BJ (cell line): ENCODE measurements at regions of chr6 and their contacts with region 1.

Region 1: GRCh38 chr6:53761036-53761435 is 33.8 kb upstream of the LRRC1 start:
- DNase-seq: no peak
- H3K4me3 ChIP-seq: no peak overlapping the region
- H3K27me3 ChIP-seq: no peaks in the 10 kb centered on the region
- CTCF ChIP-seq: no peak

Region 2: DNA sequence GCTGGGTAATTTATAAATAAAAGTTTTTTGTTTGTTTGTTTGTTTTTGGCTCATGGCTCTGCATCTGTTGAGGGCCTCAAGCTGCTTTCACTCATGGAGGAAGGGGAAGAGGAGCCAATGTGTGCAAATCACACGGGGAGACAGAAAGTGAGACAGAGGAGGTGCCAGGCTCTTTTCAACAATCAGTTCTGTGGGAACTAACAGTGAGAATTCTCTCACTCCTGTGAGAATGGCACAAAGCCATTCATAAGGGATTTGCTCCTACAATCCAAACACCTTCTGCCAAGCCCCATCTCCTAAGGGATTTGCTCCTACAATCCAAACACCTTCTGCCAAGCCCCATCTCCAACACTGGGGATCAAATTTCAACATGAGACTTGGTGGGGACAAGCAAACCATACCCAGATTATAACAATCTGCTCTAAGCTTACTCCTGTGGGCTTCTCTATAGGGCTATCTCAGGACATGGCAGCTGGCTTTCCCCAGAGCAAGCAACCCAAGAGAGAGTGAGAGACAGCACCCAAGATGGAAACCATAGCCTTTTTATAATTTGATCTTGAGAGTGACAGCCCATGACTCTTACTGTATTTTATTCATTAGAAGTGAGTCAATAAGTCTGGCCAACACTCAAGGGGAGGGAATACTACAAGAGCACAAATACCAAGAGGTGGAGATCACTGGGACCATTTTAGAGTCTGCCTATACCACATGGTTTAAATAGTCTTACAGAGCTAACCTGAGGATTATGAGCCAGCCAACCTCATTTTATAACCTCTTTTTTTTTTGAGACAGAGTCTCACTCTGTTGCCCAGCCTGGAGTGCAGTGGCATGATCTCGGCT is 11.0 kb after region 1 on chr6:
- CTCF ChIA-PET with region 1: interaction called, 10 read pairs
- POLR2A ChIA-PET with region 1: no interaction called
- DNase-seq: peak; percentile 63
- H3K4me3 ChIP-seq: no peak overlapping the region
- H3K27me3 ChIP-seq: no peaks in the 10 kb centered on the region
- CTCF ChIP-seq: no peak